ENCODE measurements at regions of chr17 and their contacts with region 1.

Region 1: DNA sequence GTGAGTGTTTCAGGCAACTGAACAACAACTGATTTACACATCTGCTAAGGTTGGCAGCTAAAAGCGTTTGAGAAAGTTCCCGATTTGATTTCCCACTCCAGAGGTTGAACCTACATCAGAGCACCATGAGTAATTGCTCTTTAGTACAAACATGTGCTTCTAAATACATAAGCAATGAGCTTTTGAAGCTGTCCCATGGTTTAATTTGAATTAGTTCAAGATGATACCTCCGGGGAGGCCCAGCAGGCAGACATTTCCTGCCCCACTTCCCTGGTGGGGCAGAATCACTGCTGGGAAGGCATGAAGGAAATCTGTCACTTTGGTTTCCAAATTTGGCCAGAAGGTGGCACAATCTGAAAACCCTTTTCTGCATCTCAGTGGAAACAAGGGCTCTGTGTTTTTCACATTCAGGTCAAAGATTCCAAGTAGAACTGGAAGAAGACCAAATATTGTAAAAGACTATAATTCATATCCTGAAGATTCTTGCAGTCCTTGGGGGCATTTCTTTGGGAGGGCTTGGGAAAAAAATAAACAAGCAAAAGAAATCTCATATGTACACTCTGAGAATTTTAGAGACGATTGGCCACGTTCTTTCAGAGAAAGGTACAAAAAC is 176.2 kb upstream of the FAM20A start:
- DNase-seq: peak in 3 of 5 donors; percentile 57 to 67 (median 60)
- ATAC-seq: peak; percentile 72 to 83 (median 76)
- H3K4me3 ChIP-seq: peak overlapping the region in 1 of 12 donors; percentile 9
- H3K27ac ChIP-seq: peak overlapping the region; percentile 38 to 87 (median 70)
- H3K4me1 ChIP-seq: peaks cover 0 to 42% (median 9%) of the 10 kb centered on the region in 12 donors
- H3K27me3 ChIP-seq: no peaks in the 10 kb centered on the region
- CTCF ChIP-seq: peak in 11 of 12 donors; percentile 57 to 76 (median 67)
- POLR2A ChIP-seq: no peak

Region 2: GRCh38 chr17:67707442-67707841 is 1069.9 kb before region 1 on chr17:
- intact Hi-C with region 1: no loop called
- DNase-seq: no peak
- ATAC-seq: no peak
- H3K4me3 ChIP-seq: no peak overlapping the region
- H3K27ac ChIP-seq: no peak overlapping the region
- H3K4me1 ChIP-seq: no peaks in the 10 kb centered on the region
- H3K27me3 ChIP-seq: no peaks in the 10 kb centered on the region
- CTCF ChIP-seq: no peak
- POLR2A ChIP-seq: no peak

Region 3: DNA sequence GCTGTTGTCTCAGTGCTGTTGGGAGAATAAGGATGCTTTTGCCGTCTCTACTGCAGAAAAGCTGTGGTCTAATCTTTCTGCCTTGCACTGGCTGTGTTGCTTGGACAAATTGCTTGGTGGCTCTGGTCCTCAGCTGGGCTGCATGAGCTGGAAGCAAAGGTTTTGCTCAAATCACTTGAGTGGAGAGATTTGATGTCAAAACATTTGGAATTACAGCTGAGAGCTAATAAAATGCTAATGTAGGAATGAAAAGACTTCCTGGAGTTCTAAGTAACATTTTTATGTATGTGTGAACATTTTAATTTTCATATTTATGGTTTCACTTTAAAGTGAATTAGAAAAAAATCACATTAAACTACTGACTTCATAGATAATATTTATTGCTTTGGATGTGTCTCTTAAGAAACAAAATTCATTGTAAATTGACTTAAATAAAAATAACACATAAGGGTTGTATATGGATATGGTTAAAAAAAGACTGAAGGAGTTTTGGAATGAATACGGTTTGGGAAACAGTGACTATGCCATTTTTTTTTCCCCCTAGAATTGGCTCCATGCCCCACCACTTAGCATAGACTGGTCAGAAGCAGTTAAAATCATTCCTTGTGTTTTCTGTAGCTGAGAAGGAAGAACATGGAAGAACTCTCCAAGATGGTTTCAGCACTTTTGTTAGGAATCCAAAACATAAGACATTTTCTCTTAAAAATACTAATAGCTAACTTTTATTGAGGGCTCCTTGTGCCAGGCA is 136.9 kb before region 1 on chr17:
- intact Hi-C with region 1: no loop called
- DNase-seq: no peak
- ATAC-seq: no peak
- H3K4me3 ChIP-seq: no peak overlapping the region
- H3K27ac ChIP-seq: no peak overlapping the region
- H3K4me1 ChIP-seq: peaks cover 0 to 5% (median 0%) of the 10 kb centered on the region in 12 donors
- H3K27me3 ChIP-seq: no peaks in the 10 kb centered on the region
- CTCF ChIP-seq: no peak
- POLR2A ChIP-seq: no peak

Region 4: GRCh38 chr17:68759343-68760132 is 17.8 kb before region 1 on chr17:
- intact Hi-C with region 1: no loop called
- DNase-seq: peak; percentile 86 to 92 (median 86)
- ATAC-seq: peak; percentile 96 to 100 (median 98)
- H3K4me3 ChIP-seq: peak overlapping the region in 10 of 12 donors; percentile 17 to 54 (median 37)
- H3K27ac ChIP-seq: peak overlapping the region; percentile 30 to 95 (median 78)
- H3K4me1 ChIP-seq: peaks cover 0 to 15% (median 6%) of the 10 kb centered on the region in 12 donors
- H3K27me3 ChIP-seq: no peaks in the 10 kb centered on the region
- CTCF ChIP-seq: peak; percentile 74 to 96 (median 87)
- POLR2A ChIP-seq: no peak

Region 5: DNA sequence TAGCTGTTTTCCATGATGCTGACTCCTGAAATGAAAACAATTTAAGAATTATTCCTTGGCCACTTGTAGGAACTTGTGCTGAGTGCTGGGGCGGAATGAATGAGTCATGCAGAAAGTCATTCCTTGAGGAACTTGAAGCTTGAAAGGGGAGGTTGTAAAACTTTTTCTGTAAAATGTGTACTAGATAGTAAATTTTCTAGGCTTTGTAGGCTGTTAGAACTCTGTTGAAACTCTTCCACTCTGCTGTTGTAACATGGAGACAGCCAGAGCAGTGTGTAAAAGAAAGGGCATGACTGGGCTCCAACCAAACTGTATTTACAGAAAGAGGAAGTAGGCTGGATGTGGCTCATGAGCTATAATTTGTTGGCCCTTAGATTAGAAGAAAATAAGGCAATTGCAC is 131.7 kb after region 1 on chr17:
- intact Hi-C with region 1: loop called in 5 of 10 experiments (anchors 5 to 10 kb)
- DNase-seq: peak in 4 of 5 donors; percentile 40 to 51 (median 45)
- ATAC-seq: peak; percentile 35 to 89 (median 83)
- H3K4me3 ChIP-seq: no peak overlapping the region
- H3K27ac ChIP-seq: peak overlapping the region in 10 of 12 donors; percentile 13 to 86 (median 60)
- H3K4me1 ChIP-seq: peaks cover 0 to 32% (median 14%) of the 10 kb centered on the region in 12 donors
- H3K27me3 ChIP-seq: no peaks in the 10 kb centered on the region
- CTCF ChIP-seq: no peak
- POLR2A ChIP-seq: no peak

Region 6: DNA sequence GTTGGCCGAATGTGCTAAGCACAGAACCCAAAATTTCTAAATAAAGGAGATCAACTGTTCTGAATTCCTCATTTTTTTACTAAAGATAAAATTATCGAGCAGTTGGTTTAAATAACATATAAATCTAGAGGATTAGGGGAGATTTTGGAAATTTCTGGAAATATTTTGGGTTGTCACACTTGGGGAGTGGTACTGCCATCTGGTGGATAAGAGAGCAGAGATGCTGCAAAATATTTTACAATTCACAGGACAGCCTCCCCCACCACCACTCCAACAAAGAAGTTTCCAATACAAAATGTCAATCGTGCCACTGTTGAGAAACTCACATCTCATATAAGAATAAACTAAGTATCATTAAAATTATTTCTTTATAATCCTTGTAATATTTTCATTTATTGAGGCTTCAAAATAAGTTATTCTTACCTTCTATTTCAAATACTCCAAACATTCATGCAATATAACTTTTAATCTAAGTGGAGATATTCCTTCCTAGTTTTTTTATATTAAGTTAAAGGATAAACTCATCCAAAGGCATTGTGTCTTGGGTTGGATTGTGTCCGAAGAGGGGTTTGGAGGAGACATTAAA is 194.9 kb after region 1 on chr17:
- intact Hi-C with region 1: loop called in 9 of 10 experiments (anchors 2 to 10 kb)
- DNase-seq: no peak
- ATAC-seq: peak in 1 of 4 donors; percentile 60
- H3K4me3 ChIP-seq: no peak overlapping the region
- H3K27ac ChIP-seq: peak overlapping the region in 2 of 12 donors; percentile 6 to 53
- H3K4me1 ChIP-seq: peaks cover 0 to 5% (median 0%) of the 10 kb centered on the region in 12 donors
- H3K27me3 ChIP-seq: no peaks in the 10 kb centered on the region
- CTCF ChIP-seq: peak; percentile 39 to 72 (median 56)
- POLR2A ChIP-seq: no peak

Region 7: DNA sequence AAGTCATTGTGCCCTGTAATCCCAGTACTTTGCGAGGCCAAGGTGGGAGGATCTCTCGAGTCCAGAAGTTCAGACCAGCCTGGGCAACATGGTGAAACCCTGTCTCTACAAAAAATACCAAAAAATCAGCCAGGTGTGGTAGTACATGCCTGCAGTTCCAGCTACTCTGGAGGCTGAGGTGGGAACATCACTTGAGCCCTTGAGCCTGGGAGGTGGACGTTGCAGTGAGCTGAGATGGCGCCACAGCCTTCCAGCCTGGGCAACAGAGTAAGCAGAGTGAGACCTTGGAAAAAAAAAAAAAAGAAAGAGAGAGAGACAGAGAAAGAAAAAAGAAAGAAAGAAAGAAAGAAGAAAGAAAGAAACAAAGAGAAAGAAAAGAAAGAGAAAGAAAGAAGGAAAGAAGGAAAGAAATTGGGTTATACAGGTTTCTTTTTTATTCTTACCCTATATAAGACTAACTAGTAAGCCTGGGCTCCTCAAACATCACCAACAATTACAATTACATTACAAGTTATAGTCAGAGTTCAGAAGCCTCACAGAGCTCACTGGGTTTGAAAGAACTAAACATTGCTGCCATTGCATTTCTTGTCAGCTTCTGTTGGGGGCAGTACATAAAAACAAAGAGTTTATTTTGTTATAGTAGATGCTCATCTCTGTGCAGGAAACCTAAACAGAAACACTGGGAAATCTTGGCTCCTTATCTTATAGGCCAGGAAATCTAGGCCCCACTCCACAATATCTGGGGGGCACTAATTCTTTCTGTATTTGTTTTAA is 290.1 kb after region 1 on chr17:
- intact Hi-C with region 1: no loop called
- DNase-seq: no peak
- ATAC-seq: no peak
- H3K4me3 ChIP-seq: no peak overlapping the region
- H3K27ac ChIP-seq: no peak overlapping the region
- H3K4me1 ChIP-seq: peaks cover 0 to 45% (median 0%) of the 10 kb centered on the region in 12 donors
- H3K27me3 ChIP-seq: no peaks in the 10 kb centered on the region
- CTCF ChIP-seq: peak in 2 of 12 donors; percentile 5 to 12
- POLR2A ChIP-seq: no peak

Region 8: DNA sequence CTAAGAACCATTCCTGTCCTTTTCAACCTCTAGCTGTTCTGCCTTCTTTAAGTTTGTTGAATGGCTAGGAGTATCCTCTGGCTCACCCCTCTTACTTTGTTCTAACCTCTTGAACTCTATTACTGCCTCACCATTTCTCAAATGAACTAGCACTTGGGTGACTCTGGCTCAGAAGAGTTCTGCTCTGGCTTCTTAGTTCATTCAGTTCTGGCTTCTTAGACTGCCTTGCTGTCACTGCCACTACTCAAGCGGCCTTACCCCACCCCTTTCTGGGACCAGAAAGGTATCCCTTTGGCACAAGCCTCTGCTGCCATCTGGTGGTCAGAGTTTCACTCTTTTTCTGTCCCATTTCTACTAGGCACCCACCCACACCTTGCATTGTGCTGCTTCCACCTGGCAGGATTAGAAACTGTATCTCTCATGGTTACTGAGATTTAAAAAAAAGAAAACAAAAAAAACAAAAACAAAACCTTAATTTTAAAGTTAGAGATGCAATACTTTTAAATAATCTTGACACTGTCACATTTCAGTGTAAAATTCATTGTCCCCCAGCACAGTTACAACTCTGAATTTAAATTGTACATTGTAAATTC is 458.1 kb after region 1 on chr17:
- intact Hi-C with region 1: loop called (anchors 1 to 5 kb)
- DNase-seq: peak; percentile 68 to 82 (median 80)
- ATAC-seq: peak; percentile 79 to 95 (median 93)
- H3K4me3 ChIP-seq: no peak overlapping the region
- H3K27ac ChIP-seq: peak overlapping the region in 1 of 12 donors; percentile 9
- H3K4me1 ChIP-seq: peaks cover 0 to 7% (median 0%) of the 10 kb centered on the region in 12 donors
- H3K27me3 ChIP-seq: no peaks in the 10 kb centered on the region
- CTCF ChIP-seq: peak; percentile 63 to 85 (median 76)
- POLR2A ChIP-seq: no peak

Region 9: GRCh38 chr17:69246726-69247375 is 469.5 kb after region 1 on chr17:
- intact Hi-C with region 1: loop called in 3 of 10 experiments (anchors 5 kb)
- DNase-seq: no peak
- ATAC-seq: peak in 2 of 4 donors; percentile 56 to 59
- H3K4me3 ChIP-seq: no peak overlapping the region
- H3K27ac ChIP-seq: no peak overlapping the region
- H3K4me1 ChIP-seq: no peaks in the 10 kb centered on the region
- H3K27me3 ChIP-seq: no peaks in the 10 kb centered on the region
- CTCF ChIP-seq: peak; percentile 43 to 77 (median 62)
- POLR2A ChIP-seq: no peak